Posterior cingulate gyrus (tissue), 11 donors: ENCODE measurements at regions of chr6 and their contacts with region 1.

Region 1: GRCh38 chr6:118283766-118284165 is 264.3 kb upstream of the PLN start:
- DNase-seq: peak in 4 of 10 donors; percentile 13 to 74 (median 38)

Region 2: GRCh38 chr6:117280922-117281321 is 1002.8 kb before region 1 on chr6:
- intact Hi-C with region 1: no loop called
- DNase-seq: no peak

Region 3: DNA sequence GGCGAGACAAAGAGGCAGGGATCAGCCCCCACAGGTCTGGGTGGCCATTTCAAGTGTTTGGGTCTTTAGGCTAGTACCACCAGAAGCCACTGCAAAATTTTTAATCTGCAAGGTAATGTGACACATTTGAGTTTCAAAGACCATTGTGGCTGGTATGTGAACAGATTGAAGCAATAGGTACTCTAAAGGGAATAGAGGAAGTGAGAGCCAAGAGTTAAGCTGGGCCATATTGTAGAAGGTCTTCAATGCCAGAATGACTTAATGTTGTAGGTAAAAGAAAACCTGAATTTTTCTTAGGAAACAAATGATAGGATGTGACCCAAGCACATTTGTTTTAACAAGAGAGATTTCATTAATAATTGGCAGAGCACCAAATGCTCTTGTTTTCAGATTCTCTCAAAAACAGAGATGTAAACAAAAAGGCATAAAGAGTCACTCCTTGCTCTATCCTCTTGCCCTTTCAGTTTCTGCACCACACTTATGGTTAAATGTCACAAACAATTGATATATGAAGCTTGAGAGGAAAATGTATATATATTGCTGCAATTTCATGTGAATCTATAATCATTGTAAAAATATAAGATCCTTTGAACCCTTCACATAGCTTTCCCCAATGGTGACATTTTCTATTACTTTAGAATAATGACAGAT is 42.8 kb before region 1 on chr6:
- intact Hi-C with region 1: no loop called
- DNase-seq: no peak

Region 4: GRCh38 chr6:118509009-118509617 is 225.3 kb after region 1 on chr6:
- intact Hi-C with region 1: loop called (anchors 1 kb)
- DNase-seq: peak in 7 of 10 donors; percentile 17 to 86 (median 44)

Region 5: GRCh38 chr6:118618679-118619377 is 335.1 kb after region 1 on chr6:
- intact Hi-C with region 1: loop called (anchors 10 kb)
- DNase-seq: peak; percentile 31 to 91 (median 68)

Region 6: GRCh38 chr6:118776607-118777549 is 493.1 kb after region 1 on chr6:
- intact Hi-C with region 1: loop called (anchors 5 kb)
- DNase-seq: peak in 5 of 10 donors; percentile 22 to 62 (median 54)